ENCODE measurements at regions of chr19 and their contacts with region 1.

Region 1: DNA sequence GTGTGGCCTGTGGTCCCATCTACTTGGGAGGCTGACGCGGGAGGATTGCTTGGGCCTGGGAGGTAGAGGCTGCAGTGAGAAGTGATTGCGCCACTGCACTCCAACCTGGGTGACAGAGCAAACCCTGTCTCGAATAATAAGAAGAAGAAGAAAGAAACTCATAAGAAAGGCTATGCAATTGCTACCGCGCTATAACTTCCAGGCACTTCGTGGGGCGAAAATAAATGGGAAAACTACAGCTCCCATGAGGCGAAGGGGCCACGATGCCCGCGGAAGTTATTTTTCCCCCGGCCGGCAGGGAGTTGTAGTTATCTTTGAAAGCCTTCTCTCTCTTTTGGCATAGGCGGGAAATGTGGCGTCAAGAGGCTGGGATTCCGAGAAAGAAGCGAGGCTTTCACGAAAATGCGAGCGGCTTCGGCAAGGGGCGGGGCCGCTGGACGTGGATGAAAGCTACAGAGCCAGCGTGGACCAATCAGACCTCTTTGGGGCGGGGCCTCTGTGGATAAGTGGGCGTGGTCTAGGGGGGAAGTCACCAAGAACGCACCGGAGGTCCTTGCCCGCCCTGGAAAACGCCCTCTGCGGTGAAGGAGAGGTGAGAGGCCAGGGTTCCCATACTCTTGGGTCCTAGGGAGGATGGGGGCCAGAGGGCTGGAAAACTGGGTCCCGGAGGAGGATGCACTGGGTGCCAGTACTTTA is at the start of gene NUCB1:
- DNase-seq: peak; percentile 99
- H3K4me3 Mint-ChIP-seq: peak within 1 kb of the TSS; percentile 93
- H3K27ac Mint-ChIP-seq: peak within 1 kb of the TSS; percentile 96
- H3K4me1 Mint-ChIP-seq: peaks cover 32% of the 10 kb centered on the region
- H3K27me3 Mint-ChIP-seq: peaks cover 5% of the 10 kb centered on the region
- total RNA-seq, gene NUCB1: 117 and 122 TPM in 2 replicates

Region 2: DNA sequence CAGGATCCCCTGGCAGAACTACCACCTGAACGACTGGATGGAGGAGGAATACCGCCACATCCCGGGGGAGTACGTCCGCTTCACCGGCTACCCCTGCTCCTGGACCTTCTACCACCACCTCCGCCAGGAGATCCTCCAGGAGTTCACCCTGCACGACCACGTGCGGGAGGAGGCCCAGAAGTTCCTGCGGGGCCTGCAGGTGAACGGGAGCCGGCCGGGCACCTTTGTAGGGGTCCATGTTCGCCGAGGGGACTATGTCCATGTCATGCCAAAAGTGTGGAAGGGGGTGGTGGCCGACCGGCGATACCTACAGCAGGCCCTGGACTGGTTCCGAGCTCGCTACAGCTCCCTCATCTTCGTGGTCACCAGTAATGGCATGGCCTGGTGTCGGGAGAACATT is 196.6 kb before region 1 on chr19:
- intact Hi-C with region 1: no loop called
- DNase-seq: no peak
- H3K4me3 Mint-ChIP-seq: no peak overlapping the region
- H3K27ac Mint-ChIP-seq: no peak overlapping the region
- H3K4me1 Mint-ChIP-seq: no peaks in the 10 kb centered on the region
- H3K27me3 Mint-ChIP-seq: peaks cover 3% of the 10 kb centered on the region

Region 3: DNA sequence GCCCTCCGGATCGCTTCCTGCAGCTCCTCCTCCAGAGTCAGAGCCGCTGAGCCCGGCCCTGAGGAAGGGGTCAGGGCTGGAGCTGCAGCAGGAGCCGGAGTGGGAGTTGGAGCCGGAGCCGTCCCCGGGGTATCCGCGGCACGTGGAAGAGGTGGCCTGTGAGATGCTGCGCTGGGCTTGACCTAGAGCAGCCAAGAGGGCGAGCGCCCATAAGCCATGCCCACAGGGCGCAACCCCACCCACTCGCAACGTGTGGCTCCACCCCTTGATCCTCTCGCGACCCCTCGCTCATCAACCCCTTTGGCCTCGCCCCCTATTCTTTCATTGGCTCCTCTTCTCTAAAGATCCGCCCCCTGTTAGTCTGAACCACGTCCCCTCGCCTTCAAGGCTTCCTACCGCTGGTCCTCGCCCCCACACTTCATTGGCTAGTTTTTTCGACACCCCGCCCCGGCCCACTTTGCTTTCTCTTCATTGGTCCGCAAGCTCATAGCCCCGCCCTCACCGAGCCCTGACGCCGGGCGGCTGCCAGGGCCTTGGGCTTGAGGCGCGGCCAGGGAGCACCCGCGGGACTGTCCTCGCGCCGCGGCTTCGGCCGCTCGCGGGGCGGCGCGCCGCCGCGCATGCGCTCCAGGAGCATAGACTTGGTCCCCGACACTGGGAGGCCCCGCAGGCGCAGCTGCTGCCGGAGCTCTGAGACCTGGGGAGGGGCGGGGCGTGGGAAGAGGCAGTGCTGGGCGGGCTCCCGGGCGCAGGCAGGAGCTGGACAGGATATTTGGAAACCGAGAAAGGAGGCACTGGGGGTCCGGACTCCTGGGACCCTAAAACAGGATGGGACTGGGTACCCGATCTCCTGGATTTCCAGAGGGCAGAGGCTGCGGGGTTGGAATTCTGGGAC is 185.8 kb before region 1 on chr19:
- intact Hi-C with region 1: loop called (anchors 1 kb)
- DNase-seq: peak; percentile 98
- H3K4me3 Mint-ChIP-seq: peak overlapping the region; percentile 80
- H3K27ac Mint-ChIP-seq: peak overlapping the region; percentile 83
- H3K4me1 Mint-ChIP-seq: peaks cover 8% of the 10 kb centered on the region
- H3K27me3 Mint-ChIP-seq: peaks cover 1% of the 10 kb centered on the region

Region 4: GRCh38 chr19:48835734-48836088 is 64.2 kb before region 1 on chr19:
- intact Hi-C with region 1: loop called (anchors 1 kb)
- DNase-seq: peak; percentile 87
- H3K4me3 Mint-ChIP-seq: peak overlapping the region; percentile 84
- H3K27ac Mint-ChIP-seq: peak overlapping the region; percentile 87
- H3K4me1 Mint-ChIP-seq: peaks cover 23% of the 10 kb centered on the region
- H3K27me3 Mint-ChIP-seq: peaks cover 7% of the 10 kb centered on the region

Region 5: GRCh38 chr19:48872182-48872883 is 27.6 kb before region 1 on chr19 and contains the start of gene PPP1R15A:
- intact Hi-C with region 1: loop called (anchors 1 kb)
- DNase-seq: peak; percentile 99
- H3K4me3 Mint-ChIP-seq: peak within 1 kb of the TSS; percentile 97
- H3K27ac Mint-ChIP-seq: peak within 1 kb of the TSS; percentile 99
- H3K4me1 Mint-ChIP-seq: peaks cover 42% of the 10 kb centered on the region
- H3K27me3 Mint-ChIP-seq: peaks cover 4% of the 10 kb centered on the region
- total RNA-seq, gene PPP1R15A: 53.1 and 53.7 TPM in 2 replicates

Region 6: GRCh38 chr19:48933382-48933932 is 33.5 kb after region 1 on chr19 and contains the start of gene DHDH:
- intact Hi-C with region 1: loop called (anchors 2 kb)
- DNase-seq: peak; percentile 85
- H3K4me3 Mint-ChIP-seq: peak within 1 kb of the TSS; percentile 83
- H3K27ac Mint-ChIP-seq: peak within 1 kb of the TSS; percentile 61
- H3K4me1 Mint-ChIP-seq: peaks cover 14% of the 10 kb centered on the region
- H3K27me3 Mint-ChIP-seq: peaks cover 11% of the 10 kb centered on the region
- total RNA-seq, gene DHDH: not detected in 2 replicates

Region 7: DNA sequence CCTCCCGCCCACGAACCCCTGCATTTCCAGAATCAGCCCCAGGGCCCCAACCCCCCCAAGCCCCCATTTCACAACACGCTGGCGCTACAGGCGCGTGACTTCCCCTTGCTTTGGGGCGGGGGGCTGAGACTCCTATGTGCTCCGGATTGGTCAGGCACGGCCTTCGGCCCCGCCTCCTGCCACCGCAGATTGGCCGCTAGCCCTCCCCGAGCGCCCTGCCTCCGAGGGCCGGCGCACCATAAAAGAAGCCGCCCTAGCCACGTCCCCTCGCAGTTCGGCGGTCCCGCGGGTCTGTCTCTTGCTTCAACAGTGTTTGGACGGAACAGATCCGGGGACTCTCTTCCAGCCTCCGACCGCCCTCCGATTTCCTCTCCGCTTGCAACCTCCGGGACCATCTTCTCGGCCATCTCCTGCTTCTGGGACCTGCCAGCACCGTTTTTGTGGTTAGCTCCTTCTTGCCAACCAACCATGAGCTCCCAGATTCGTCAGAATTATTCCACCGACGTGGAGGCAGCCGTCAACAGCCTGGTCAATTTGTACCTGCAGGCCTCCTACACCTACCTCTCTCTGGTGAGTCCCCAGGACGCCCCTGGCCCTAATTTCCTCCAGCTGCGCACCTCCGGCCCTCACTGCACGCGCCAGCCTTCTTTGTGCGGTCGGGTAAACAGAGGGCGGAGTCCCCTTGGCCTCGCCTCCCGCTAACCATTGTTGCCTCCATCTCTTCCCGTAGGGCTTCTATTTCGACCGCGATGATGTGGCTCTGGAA is 65.3 kb after region 1 on chr19 and contains the start of gene FTL:
- intact Hi-C with region 1: loop called (anchors 1 kb)
- DNase-seq: peak; percentile 91
- H3K4me3 Mint-ChIP-seq: peak within 1 kb of the TSS; percentile 95
- H3K27ac Mint-ChIP-seq: peak within 1 kb of the TSS; percentile 96
- H3K4me1 Mint-ChIP-seq: peaks cover 58% of the 10 kb centered on the region
- H3K27me3 Mint-ChIP-seq: no peaks in the 10 kb centered on the region
- total RNA-seq, gene FTL: 651 and 662 TPM in 2 replicates

Region 8: DNA sequence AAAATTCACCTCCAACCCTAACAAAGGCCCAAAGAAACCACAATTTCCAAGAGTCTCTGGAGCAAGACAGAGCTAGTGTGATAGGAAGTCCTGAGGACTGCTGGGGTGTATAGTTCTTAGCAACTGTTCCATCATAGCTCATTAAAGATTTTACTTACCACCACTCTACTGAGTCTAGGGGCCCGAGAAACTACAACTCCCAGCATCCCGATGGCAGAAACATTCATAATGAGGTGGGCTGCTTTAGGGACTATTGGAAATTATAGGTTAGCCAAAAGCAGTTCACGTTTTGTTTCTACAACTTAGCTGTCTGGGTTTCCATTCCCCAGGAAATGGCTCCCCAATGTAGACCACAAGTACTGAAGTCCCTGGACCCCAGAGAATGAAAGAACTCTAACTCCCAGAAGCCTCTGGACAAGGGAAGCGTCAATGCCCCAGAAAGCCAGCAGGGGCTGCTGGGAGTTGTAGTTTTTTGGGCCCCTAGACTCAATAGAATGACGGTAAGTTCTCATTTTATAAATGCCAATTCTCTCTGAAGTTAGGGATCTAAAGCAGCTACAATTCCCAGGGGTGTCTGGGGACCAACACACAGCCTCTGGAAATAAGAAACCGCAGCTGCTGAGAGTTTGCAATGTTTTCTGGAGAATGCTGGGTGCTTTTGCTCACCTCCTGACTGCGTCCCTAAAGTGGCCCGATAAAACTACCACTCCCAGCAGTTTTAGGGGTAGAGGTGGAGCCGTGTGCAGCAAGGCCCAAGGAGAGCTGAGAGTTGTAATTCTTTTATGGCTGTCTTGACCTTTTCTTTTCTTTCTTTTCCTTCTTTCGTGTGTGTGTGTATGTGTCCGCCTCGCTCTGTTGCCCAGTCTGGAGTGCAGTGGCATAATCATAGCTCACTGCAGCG is 76.3 kb after region 1 on chr19:
- intact Hi-C with region 1: no loop called
- DNase-seq: no peak
- H3K4me3 Mint-ChIP-seq: no peak overlapping the region
- H3K27ac Mint-ChIP-seq: no peak overlapping the region
- H3K4me1 Mint-ChIP-seq: peaks cover 11% of the 10 kb centered on the region
- H3K27me3 Mint-ChIP-seq: no peaks in the 10 kb centered on the region